GM10248 (cell line): ENCODE measurements at regions of chr11 and their contacts with region 1.

Region 1: GRCh38 chr11:8566613-8567210 is 27.3 kb downstream of the STK33 start:
- DNase-seq: peak; percentile 26
- CTCF ChIP-seq: peak; percentile 49

Region 2: GRCh38 chr11:8192016-8192895 is 374.5 kb before region 1 on chr11:
- CTCF ChIA-PET with region 1: interaction called, 24 read pairs
- POLR2A ChIA-PET with region 1: no interaction called
- DNase-seq: peak; percentile 83
- CTCF ChIP-seq: peak; percentile 91

Region 3: DNA sequence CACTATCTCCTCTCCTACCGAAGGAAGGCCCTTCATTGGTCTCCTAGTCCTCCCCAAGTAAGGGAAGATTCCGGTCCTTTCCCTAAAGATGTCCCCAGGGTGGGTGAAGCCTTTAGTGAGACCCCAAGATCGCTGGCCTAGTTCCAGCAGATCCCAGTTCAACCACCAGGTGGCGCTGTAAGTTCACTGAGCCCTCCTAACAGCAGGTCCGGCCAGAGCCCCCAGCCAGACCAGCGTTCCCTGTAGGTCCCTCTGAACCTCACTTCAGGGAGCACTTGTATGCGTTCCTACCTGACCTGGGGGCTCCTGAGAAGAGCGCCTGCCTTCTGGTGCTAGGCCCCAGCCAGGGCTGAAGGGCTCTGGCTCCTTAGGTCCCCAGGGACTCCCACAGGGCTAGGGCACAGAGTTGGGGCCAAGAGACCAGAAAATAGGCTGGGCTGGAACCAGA is 341.1 kb before region 1 on chr11:
- CTCF ChIA-PET with region 1: interaction called, 69 read pairs
- POLR2A ChIA-PET with region 1: no interaction called
- DNase-seq: peak; percentile 88
- CTCF ChIP-seq: peak; percentile 83

Region 4: DNA sequence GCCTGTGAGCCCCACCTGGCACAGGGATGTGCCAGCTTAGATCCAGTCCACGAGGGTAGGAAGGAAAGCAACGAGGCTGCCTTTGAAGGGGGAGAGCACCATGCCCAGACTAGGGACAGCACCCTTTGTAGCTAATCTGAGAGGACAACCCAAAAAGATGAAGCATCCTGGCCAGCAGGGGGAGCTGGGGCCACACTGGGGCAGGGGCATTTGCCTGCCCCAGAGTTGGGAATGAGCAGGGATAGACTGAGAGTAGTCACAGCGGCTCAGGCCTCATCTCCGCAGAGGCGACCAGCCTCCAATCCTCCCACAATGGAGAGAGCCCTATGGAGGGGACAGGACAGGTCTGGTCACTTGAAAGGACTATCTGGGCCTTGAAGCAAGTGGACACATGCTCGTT is 319.4 kb before region 1 on chr11:
- CTCF ChIA-PET with region 1: interaction called, 14 read pairs
- POLR2A ChIA-PET with region 1: no interaction called
- DNase-seq: no peak
- CTCF ChIP-seq: peak; percentile 30

Region 5: GRCh38 chr11:8282626-8283025 is 284.1 kb before region 1 on chr11:
- CTCF ChIA-PET with region 1: no interaction called
- POLR2A ChIA-PET with region 1: no interaction called
- DNase-seq: no peak
- CTCF ChIP-seq: no peak

Region 6: GRCh38 chr11:8365216-8365941 is 201.3 kb before region 1 on chr11:
- CTCF ChIA-PET with region 1: no interaction called
- POLR2A ChIA-PET with region 1: no interaction called
- DNase-seq: no peak
- CTCF ChIP-seq: no peak

Region 7: DNA sequence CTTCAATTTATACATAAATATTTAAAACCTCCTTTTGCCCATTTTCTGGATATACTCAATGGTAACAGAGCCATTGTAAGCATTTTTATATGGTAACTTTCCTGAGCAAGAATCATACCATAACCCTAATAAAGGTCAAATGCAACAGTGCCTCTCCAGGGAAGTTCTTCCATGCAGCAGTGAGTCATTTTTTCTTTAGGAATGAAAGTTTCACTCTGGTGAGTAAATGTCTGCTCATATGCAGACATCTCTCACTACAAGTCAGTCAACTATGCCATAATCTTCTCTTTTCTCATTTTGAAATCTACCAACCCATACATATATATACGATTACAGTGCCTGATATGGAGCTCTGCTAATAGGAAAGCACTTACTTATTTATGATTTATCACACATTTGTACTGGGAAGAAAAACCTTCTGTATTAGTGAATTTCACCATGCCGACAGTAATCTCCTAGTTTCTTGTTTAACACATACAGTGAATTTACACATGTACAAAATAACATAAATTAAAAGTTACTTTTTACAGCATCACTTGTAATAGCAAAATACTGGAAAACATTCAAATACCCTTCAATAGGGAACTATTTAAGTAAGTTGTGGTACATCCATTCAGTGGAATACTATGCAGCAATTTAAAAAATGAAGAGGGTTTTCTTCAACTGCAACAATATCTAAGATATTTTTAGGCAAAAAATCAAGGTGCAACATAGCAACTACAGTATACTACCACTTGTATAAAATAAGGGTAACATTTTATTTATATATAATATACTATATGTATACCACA is 11.3 kb after region 1 on chr11:
- CTCF ChIA-PET with region 1: interaction called, 15 read pairs
- POLR2A ChIA-PET with region 1: no interaction called
- DNase-seq: no peak
- CTCF ChIP-seq: no peak

Region 8: DNA sequence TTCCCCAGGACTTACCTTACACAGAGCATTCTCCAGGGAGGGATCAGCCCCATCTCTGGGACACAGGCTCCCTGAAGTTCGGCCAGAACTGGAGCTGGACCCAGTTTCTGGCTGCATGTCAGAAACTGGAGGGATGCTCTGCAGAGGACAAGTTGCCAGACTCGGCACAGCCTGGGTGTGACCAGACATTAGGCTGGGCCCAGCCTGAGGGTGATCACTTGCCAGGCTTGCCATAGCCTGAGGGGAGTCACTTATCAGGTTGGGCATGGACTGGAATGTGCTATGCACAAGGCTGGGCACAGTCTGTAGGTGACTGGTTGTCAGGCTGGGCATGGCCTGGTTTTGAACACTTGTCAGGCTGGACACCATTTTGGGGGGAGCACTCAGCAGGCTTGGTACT is 58.0 kb after region 1 on chr11:
- CTCF ChIA-PET with region 1: no interaction called
- POLR2A ChIA-PET with region 1: no interaction called
- DNase-seq: no peak
- CTCF ChIP-seq: no peak

Region 9: GRCh38 chr11:8649361-8649760 is 82.6 kb after region 1 on chr11:
- CTCF ChIA-PET with region 1: no interaction called
- POLR2A ChIA-PET with region 1: no interaction called
- DNase-seq: no peak
- CTCF ChIP-seq: no peak